CD8-positive, alpha-beta T cell (primary cell): ENCODE measurements at regions of chr3 and their contacts with region 1.

Region 1: GRCh38 chr3:14203521-14204079 is 25.0 kb downstream of the LSM3 start:
- DNase-seq: peak in 8 of 9 experiments; percentile 8 to 68 (median 39)
- ATAC-seq: peak; percentile 62
- H3K4me3 ChIP-seq: no peak overlapping the region
- H3K4me3 Mint-ChIP-seq: no peak overlapping the region
- H3K27ac ChIP-seq: no peak overlapping the region
- H3K27ac Mint-ChIP-seq: no peak overlapping the region
- H3K4me1 ChIP-seq: no peaks in the 10 kb centered on the region
- H3K4me1 Mint-ChIP-seq: no peaks in the 10 kb centered on the region
- H3K27me3 ChIP-seq: no peaks in the 10 kb centered on the region
- H3K27me3 Mint-ChIP-seq: no peaks in the 10 kb centered on the region
- CTCF ChIP-seq: peak; percentile 66

Region 2: GRCh38 chr3:13770170-13771169 is 433.1 kb before region 1 on chr3:
- CTCF ChIA-PET with region 1: no interaction called
- POLR2A ChIA-PET with region 1: no interaction called
- intact Hi-C with region 1: no loop called
- DNase-seq: no peak
- ATAC-seq: no peak
- H3K4me3 ChIP-seq: no peak overlapping the region
- H3K4me3 Mint-ChIP-seq: no peak overlapping the region
- H3K27ac ChIP-seq: no peak overlapping the region
- H3K27ac Mint-ChIP-seq: no peak overlapping the region
- H3K4me1 ChIP-seq: peaks cover 13% of the 10 kb centered on the region
- H3K4me1 Mint-ChIP-seq: peaks cover 17% of the 10 kb centered on the region
- H3K27me3 ChIP-seq: no peaks in the 10 kb centered on the region
- H3K27me3 Mint-ChIP-seq: no peaks in the 10 kb centered on the region
- CTCF ChIP-seq: no peak

Region 3: DNA sequence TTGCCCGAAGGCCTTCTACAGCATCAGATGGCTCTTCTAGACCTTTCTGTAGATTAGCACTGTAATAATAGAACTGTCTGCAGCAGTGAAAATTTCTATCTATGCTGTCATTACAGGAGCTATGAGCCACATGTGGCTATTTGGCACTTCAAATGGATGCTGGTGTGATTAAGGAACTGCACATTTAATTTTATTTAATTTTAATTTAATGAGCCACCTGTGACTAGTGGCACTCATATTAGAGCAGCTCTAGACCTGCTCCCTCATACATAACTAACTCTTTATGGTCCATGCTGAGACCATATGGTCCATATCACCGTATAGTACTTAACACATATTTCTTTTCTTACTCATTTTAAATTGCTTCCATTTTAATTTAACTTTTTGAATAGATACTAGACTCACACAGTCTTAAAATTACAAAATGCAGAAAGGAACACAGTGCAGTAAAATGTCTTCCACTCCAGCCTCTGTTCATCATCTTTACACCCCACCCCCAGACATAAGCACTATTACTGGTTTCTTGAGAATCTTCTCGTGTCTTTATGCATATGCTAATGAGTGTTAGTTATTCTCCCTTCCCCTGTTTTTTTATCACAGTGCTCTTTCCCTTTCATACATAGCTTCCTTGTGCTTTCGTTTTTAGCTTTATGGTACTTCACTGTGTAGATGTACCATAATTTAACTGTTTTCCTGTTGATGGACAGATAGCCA is 15.4 kb before region 1 on chr3:
- CTCF ChIA-PET with region 1: interaction called, 13 read pairs
- POLR2A ChIA-PET with region 1: no interaction called
- intact Hi-C with region 1: no loop called
- DNase-seq: no peak
- ATAC-seq: no peak
- H3K4me3 ChIP-seq: no peak overlapping the region
- H3K4me3 Mint-ChIP-seq: no peak overlapping the region
- H3K27ac ChIP-seq: no peak overlapping the region
- H3K27ac Mint-ChIP-seq: no peak overlapping the region
- H3K4me1 ChIP-seq: peaks cover 3% of the 10 kb centered on the region
- H3K4me1 Mint-ChIP-seq: peaks cover 65% of the 10 kb centered on the region
- H3K27me3 ChIP-seq: no peaks in the 10 kb centered on the region
- H3K27me3 Mint-ChIP-seq: no peaks in the 10 kb centered on the region
- CTCF ChIP-seq: no peak

Region 4: DNA sequence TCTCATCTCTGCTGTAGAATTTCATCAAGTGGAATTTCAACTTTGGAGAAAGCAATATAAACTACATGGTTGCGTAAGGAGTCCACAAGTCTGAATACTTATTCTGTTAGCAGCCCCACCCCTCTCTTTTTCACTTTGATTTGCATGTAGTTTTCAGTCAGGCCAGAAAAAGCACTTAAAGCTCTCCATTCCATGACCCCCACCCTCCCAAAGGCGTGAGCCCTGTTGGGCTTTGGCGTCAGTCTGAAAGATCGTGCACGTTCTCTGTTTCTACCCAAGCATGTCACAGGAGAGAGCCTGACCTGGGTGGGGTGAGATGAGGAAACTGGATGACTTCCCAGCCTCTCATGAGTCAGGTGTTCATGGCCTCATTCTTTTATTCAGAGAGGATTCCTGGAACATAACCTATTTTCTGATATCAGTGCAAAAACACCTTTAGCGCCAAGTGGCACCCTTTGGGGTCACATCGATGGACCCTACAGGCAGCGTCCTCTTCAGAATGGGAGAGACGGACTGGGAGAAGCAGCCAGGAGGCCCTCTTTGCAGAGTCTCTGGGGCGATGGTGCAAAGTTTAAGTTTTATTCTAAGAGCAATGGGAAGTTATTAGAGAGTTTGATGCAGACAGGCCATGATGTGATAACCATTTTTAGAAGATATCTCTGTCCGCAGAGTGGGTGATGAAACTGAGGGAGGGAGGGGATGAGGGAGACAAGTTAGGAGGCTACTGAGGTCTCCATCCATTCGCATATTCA is 30.8 kb after region 1 on chr3:
- CTCF ChIA-PET with region 1: interaction called, 14 read pairs
- POLR2A ChIA-PET with region 1: no interaction called
- intact Hi-C with region 1: no loop called
- DNase-seq: no peak
- ATAC-seq: no peak
- H3K4me3 ChIP-seq: no peak overlapping the region
- H3K4me3 Mint-ChIP-seq: no peak overlapping the region
- H3K27ac ChIP-seq: no peak overlapping the region
- H3K27ac Mint-ChIP-seq: no peak overlapping the region
- H3K4me1 ChIP-seq: no peaks in the 10 kb centered on the region
- H3K4me1 Mint-ChIP-seq: peaks cover 9% of the 10 kb centered on the region
- H3K27me3 ChIP-seq: peaks cover 0 to 5% of the 10 kb centered on the region in 2 experiments
- H3K27me3 Mint-ChIP-seq: peaks cover 25% of the 10 kb centered on the region
- CTCF ChIP-seq: no peak

Region 5: DNA sequence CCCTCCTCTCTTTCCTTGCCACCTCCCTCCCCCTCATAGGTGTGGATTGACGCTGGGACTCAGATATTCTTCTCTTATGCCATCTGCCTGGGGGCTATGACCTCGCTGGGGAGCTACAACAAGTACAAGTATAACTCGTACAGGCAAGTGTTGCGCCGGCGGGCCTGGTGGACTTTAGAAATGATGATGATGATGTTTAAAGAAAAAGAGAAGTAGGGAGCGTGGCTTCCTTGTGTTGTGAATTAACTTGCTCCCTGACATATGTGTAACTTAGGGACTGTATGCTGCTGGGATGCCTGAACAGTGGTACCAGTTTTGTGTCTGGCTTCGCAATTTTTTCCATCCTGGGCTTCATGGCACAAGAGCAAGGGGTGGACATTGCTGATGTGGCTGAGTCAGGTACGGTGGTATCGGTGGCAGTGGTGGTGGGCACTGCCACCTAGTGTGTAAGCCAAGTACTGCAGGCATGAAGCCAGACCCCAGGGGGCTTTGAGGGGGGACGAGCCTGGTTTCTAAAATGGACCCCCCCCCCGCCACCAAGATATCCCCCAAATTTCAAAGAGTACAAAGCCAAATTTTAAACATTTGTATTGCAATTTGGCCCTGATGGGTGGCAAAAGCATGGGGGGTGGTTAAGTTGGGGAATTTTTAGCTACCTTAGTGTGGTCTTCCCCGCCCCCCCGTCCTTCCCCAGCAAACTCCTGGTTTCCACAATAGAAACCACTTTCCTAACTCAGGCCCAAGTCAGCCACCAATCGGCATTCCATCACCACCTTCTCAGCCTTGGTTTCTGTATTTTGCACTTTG is 264.4 kb after region 1 on chr3:
- CTCF ChIA-PET with region 1: interaction called, 33 read pairs
- POLR2A ChIA-PET with region 1: no interaction called
- intact Hi-C with region 1: loop called (anchors 1 kb)
- DNase-seq: peak; percentile 17 to 69 (median 48)
- ATAC-seq: peak; percentile 84
- H3K4me3 ChIP-seq: no peak overlapping the region
- H3K4me3 Mint-ChIP-seq: no peak overlapping the region
- H3K27ac ChIP-seq: no peak overlapping the region
- H3K27ac Mint-ChIP-seq: no peak overlapping the region
- H3K4me1 ChIP-seq: no peaks in the 10 kb centered on the region
- H3K4me1 Mint-ChIP-seq: no peaks in the 10 kb centered on the region
- H3K27me3 ChIP-seq: no peaks in the 10 kb centered on the region
- H3K27me3 Mint-ChIP-seq: no peaks in the 10 kb centered on the region
- CTCF ChIP-seq: peak; percentile 87